ENCODE measurements at regions of chr2 and their contacts with region 1.

Region 1: GRCh38 chr2:43226558-43226954 is at the start of gene ZFP36L2:
- DNase-seq: peak; percentile 78 to 96
- H3K4me3 ChIP-seq: peak within 1 kb of the TSS; percentile 81 to 89
- H3K27ac ChIP-seq: peak within 1 kb of the TSS; percentile 98
- H3K4me1 ChIP-seq: peaks cover 6 to 17% of the 10 kb centered on the region in 2 donors
- H3K27me3 ChIP-seq: no peaks in the 10 kb centered on the region
- CTCF ChIP-seq: peak in 1 of 3 experiments; percentile 19
- total RNA-seq, gene ZFP36L2: 148 TPM

Region 2: DNA sequence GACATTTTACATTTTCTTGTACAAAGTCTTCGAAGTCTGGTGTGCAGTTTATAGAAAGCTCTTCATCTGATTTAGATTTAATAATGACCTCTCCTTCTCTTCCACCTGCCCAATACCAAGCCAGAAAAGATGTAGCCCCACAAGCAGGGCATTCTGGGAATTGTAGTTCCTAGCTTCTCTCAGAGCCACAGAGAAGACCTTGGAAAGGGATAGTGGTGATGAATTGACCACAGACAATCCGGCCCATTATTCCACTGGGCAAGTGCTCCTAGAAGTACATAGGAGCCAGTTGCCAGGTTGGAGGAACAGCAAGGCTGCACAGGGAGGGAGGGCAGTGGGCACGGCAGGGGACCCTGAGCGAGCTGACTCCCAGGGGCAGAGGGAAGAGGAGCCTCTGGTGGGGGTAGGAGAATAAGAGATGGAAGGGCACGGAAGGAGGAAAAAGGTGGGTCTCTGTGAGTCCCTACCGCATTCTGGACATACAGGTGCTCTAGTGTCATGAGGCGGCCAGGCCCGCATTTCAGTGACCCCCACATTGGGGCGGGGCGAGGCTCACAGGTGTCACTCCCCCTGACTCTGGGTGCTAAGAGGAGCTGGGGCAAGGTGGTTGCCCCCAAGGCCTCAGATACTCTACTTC is 281.7 kb before region 1 on chr2:
- intact Hi-C with region 1: loop called (anchors 1 kb)
- DNase-seq: no peak
- H3K4me3 ChIP-seq: no peak overlapping the region
- H3K27ac ChIP-seq: no peak overlapping the region
- H3K4me1 ChIP-seq: peaks cover 0 to 3% of the 10 kb centered on the region in 2 donors
- H3K27me3 ChIP-seq: no peaks in the 10 kb centered on the region
- CTCF ChIP-seq: no peak

Region 3: GRCh38 chr2:43041661-43042360 is 184.7 kb before region 1 on chr2:
- intact Hi-C with region 1: loop called (anchors 5 kb)
- DNase-seq: peak; percentile 39 to 87
- H3K4me3 ChIP-seq: no peak overlapping the region
- H3K27ac ChIP-seq: peak overlapping the region; percentile 63 to 74
- H3K4me1 ChIP-seq: peaks cover 9 to 29% of the 10 kb centered on the region in 2 donors
- H3K27me3 ChIP-seq: no peaks in the 10 kb centered on the region
- CTCF ChIP-seq: no peak

Region 4: GRCh38 chr2:43100883-43101662 is 125.5 kb before region 1 on chr2:
- intact Hi-C with region 1: loop called (anchors 5 kb)
- DNase-seq: no peak
- H3K4me3 ChIP-seq: peak overlapping the region; percentile 44 to 65
- H3K27ac ChIP-seq: peak overlapping the region; percentile 94 to 95
- H3K4me1 ChIP-seq: peaks cover 27 to 40% of the 10 kb centered on the region in 2 donors
- H3K27me3 ChIP-seq: no peaks in the 10 kb centered on the region
- CTCF ChIP-seq: no peak

Region 5: DNA sequence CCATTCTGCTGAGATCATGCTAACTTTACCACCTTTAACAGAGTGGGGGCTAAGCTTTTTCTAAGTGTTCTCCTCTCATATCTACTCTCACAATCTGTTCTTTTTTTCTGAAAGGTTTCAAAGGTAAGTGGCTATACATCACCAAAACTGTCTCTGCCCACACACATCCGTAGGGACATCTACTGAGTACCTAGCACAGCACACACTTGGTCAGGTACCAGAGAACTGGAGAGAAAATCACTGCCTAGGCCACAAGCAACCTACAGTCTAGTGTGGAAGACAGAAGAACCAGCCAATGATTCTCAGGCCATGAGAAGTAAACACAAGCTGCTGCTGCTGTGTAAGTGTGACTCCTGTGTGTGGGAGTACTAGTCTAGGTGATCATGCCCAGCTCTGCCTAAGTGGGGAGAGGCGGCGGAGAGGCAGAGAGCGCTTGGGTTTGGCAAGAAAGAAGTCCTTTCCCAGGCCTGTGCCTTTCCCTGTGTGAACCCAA is 175.9 kb after region 1 on chr2:
- intact Hi-C with region 1: loop called (anchors 5 kb)
- DNase-seq: no peak
- H3K4me3 ChIP-seq: no peak overlapping the region
- H3K27ac ChIP-seq: peak overlapping the region in 1 of 2 donors; percentile 14
- H3K4me1 ChIP-seq: peaks cover 7 to 43% of the 10 kb centered on the region in 2 donors
- H3K27me3 ChIP-seq: no peaks in the 10 kb centered on the region
- CTCF ChIP-seq: no peak

Measured in ascending aorta (tissue), 2 donors.